Heart left ventricle (tissue), 16 donors: ENCODE measurements at regions of chr9 and their contacts with region 1.

Region 1: DNA sequence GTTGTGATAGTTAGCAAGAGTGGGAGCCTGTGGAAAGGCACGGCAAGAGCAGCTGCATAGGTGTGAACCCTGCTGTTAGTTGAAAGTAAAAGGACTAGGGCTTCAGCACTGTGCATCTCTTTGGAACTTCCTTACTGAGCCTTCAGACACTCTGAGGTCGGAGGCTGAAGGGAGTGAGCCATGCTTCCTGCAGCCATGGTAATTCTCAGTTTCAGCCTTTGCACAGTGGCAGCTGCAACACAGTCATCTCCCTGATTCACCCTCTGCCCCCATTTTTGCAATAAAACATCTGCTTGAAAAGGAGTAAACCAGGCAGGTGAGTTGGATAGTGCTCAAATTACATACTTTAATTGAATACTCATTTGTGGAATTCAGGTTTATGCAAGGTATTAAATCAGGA is 6.5 kb upstream of the TLE4 start:
- DNase-seq: no peak
- ATAC-seq: no peak
- H3K4me3 ChIP-seq: no peak overlapping the region
- H3K27ac ChIP-seq: no peak overlapping the region
- H3K4me1 ChIP-seq: peaks cover 0 to 19% (median 2%) of the 10 kb centered on the region in 12 donors
- H3K27me3 ChIP-seq: peaks cover 0 to 5% (median 0%) of the 10 kb centered on the region in 9 donors
- CTCF ChIP-seq: no peak
- POLR2A ChIP-seq: no peak

Region 2: GRCh38 chr9:80175286-80176150 is 610.3 kb after region 1 on chr9:
- intact Hi-C with region 1: loop called in 1 of 10 experiments (anchors 10 kb)
- DNase-seq: no peak
- ATAC-seq: no peak
- H3K4me3 ChIP-seq: no peak overlapping the region
- H3K27ac ChIP-seq: no peak overlapping the region
- H3K4me1 ChIP-seq: no peaks in the 10 kb centered on the region
- H3K27me3 ChIP-seq: no peaks in the 10 kb centered on the region
- CTCF ChIP-seq: peak; percentile 62 to 84 (median 74)
- POLR2A ChIP-seq: no peak